ENCODE measurements at regions of chr2 and their contacts with region 1.

Region 1: DNA sequence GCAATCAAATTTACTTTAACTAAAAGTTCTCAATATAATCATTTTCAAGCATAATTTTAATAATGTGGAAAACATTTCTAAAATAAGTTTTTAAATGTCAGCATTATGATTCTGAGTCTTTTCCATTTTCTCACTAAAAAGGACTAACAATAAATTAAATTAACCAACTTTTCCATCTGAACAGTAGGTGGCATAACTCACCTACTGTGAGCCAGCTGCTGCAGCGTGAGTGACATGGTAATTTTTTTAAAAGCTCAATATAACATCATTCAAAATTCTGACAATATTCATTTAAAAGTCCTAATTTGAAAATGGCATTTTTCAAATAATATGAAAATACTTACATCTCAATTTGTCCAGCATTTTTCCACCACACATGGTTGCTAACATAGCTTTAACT is 66.5 kb downstream of the DTNB start:
- DNase-seq: peak; percentile 55
- H3K4me3 ChIP-seq: no peak overlapping the region
- H3K27ac ChIP-seq: no peak overlapping the region
- H3K4me1 ChIP-seq: peaks cover 2% of the 10 kb centered on the region
- H3K27me3 ChIP-seq: no peaks in the 10 kb centered on the region
- CTCF ChIP-seq: peak; percentile 23 to 40
- POLR2A ChIP-seq: no peak

Region 2: GRCh38 chr2:25639171-25639570 is 32.3 kb after region 1 on chr2:
- CTCF ChIA-PET with region 1: interaction called, 14 read pairs
- POLR2A ChIA-PET with region 1: no interaction called
- dilution Hi-C with region 1: no loop called
- intact Hi-C with region 1: no loop called
- DNase-seq: peak; percentile 54
- H3K4me3 ChIP-seq: no peak overlapping the region
- H3K27ac ChIP-seq: no peak overlapping the region
- H3K4me1 ChIP-seq: peaks cover 4% of the 10 kb centered on the region
- H3K27me3 ChIP-seq: no peaks in the 10 kb centered on the region
- CTCF ChIP-seq: no peak
- POLR2A ChIP-seq: no peak

Region 3: DNA sequence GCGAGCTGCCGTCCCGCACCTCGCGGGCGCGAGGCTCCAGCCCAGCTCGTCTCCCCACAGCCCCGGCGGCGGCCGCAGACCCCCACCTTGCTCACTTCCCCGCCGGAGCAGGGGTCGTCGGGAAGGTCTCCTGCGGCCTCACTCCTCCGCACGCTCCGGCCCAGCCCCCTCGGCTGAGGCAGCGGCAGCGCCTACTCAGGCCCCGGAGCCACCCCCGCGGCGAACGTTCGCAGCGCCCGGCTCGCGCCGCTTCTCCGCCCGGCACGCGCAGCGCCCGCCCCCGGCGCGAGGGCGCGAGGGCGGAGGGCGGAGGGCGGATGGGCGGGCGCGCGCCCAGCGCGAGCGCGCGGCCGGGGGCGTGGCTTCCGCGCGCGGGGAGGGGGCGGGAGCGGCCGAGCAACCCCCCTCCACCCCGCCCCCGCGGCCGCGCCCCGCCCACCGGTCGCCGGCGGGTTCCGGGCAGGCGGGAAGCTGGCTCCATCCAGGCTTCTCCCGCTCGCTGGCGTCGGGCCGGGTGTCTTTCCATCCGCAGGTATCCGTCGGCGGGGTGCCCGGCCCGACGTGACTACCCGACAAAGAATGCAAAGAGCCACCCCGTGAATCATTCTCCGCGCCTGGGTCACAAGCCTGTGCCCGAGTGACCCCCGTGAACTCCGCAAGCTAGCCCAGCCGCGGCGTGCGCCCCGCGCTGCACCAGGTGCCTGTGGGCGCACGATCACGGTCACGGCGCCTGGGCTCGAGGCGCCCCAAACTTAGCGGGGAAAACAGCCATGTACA is 66.6 kb after region 1 on chr2 and contains the start of gene DTNB:
- CTCF ChIA-PET with region 1: interaction called, 561 read pairs
- POLR2A ChIA-PET with region 1: no interaction called
- dilution Hi-C with region 1: no loop called
- intact Hi-C with region 1: no loop called
- DNase-seq: peak; percentile 64
- H3K4me3 ChIP-seq: peak within 1 kb of the TSS; percentile 23 to 92 (median 66)
- H3K27ac ChIP-seq: no peak within 1 kb of the TSS
- H3K4me1 ChIP-seq: peaks cover 7% of the 10 kb centered on the region
- H3K27me3 ChIP-seq: peaks cover 0 to 4% of the 10 kb centered on the region in 2 experiments
- CTCF ChIP-seq: no peak
- POLR2A ChIP-seq: peak; percentile 66
- total RNA-seq, gene DTNB: 13.9 and 17.0 TPM in 2 replicates

Region 4: DNA sequence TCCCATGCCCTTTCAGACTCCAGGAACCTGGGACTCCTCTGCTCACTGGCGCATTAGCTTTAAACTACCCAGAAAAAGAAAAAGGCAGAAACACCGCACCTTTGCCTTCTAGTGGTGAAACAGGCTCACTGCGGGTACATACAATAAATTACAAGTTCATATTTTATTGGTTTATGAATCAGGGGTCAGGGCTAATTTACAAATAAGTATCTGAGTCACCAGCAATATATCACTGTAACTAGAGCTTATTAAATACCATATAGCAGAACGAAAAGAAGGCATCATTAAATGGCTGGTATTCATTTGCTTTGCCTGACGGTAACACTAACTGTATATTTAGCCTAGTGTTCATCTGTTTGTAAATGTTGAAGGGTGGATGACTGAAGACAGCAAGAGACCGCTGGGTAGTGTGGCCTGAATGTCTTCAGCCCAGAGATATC is 93.3 kb after region 1 on chr2:
- CTCF ChIA-PET with region 1: interaction called, 232 read pairs
- POLR2A ChIA-PET with region 1: no interaction called
- dilution Hi-C with region 1: no loop called
- intact Hi-C with region 1: loop called (anchors 1 kb)
- DNase-seq: peak; percentile 73
- H3K4me3 ChIP-seq: no peak overlapping the region
- H3K27ac ChIP-seq: no peak overlapping the region
- H3K4me1 ChIP-seq: peaks cover 14% of the 10 kb centered on the region
- H3K27me3 ChIP-seq: peaks cover 0 to 4% of the 10 kb centered on the region in 2 experiments
- CTCF ChIP-seq: peak; percentile 63
- POLR2A ChIP-seq: no peak

Region 5: DNA sequence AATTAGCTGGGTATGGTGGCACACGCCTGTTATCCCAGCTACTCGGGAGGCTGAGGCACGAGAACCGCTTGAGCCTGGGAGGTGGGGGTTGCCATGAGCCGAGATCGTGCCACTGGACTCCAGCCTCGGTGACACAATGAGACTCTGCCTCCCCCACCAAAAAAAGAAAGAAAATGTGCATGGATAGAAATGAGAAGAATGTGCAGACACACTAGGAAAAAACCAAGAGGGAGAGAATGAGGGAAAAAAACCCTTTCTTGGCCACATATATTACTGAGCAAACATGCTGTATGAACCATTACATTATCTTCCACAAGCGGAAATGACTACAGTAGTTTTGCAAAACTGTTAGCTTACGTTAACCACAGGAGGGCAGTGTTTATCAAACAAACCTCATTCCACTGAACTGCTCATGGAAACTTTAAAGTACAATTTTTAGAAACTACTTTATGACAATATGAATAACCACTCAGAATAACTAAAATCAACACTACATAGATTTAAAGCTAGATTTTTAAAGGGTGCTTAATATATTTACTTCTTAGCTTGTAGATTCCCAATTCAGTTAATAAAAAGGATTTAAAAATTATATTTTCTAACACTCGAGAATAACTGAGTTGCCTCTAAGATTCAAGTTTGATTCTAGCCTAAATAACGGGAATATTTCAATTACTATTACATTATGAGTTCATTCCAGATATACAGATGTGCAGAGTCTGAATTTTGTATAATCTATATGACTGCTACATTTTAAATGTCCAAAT is 245.0 kb after region 1 on chr2:
- CTCF ChIA-PET with region 1: interaction called, 16 read pairs
- POLR2A ChIA-PET with region 1: no interaction called
- dilution Hi-C with region 1: no loop called
- intact Hi-C with region 1: loop called (anchors 10 kb)
- DNase-seq: peak; percentile 81
- H3K4me3 ChIP-seq: no peak overlapping the region
- H3K27ac ChIP-seq: peak overlapping the region; percentile 50
- H3K4me1 ChIP-seq: peaks cover 5% of the 10 kb centered on the region
- H3K27me3 ChIP-seq: no peaks in the 10 kb centered on the region
- CTCF ChIP-seq: peak; percentile 45 to 48
- POLR2A ChIP-seq: no peak